ENCODE measurements at regions of chr15 and their contacts with region 1.

Region 1: GRCh38 chr15:67372543-67372942 is 118.0 kb downstream of the IQCH start:
- H3K4me3 ChIP-seq: no peak overlapping the region
- H3K27ac ChIP-seq: no peak overlapping the region
- H3K4me1 ChIP-seq: no peaks in the 10 kb centered on the region
- CTCF ChIP-seq: no peak

Region 2: GRCh38 chr15:67472957-67473356 is 100.4 kb after region 1 on chr15:
- CTCF ChIA-PET with region 1: no interaction called
- POLR2A ChIA-PET with region 1: no interaction called
- H3K4me3 ChIP-seq: no peak overlapping the region
- H3K27ac ChIP-seq: no peak overlapping the region
- H3K4me1 ChIP-seq: no peaks in the 10 kb centered on the region
- CTCF ChIP-seq: no peak

Region 3: DNA sequence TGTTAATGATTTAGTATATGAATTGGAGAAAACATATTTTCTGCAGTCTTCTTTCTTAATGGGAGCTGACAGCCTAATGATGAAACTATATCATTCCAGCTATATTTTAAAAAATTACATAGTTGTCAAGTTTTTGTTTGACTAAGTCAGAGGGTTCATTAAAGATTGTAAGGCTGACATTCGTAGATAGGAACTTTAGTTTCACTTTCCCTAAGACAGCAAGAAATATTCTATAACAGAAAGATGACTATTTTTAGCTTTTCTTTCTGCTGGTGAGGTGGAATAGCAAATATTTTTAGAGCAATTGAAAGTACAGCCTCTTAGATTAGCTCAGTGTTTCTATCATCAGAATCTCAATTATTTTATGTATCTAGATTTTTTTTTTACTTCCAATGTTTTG is 741.8 kb after region 1 on chr15:
- CTCF ChIA-PET with region 1: interaction called, 10 read pairs
- POLR2A ChIA-PET with region 1: no interaction called
- H3K4me3 ChIP-seq: peak overlapping the region; percentile 7
- H3K27ac ChIP-seq: no peak overlapping the region
- H3K4me1 ChIP-seq: peaks cover 21% of the 10 kb centered on the region
- CTCF ChIP-seq: no peak